ENCODE measurements at regions of chr1 and their contacts with region 1.

Region 1: DNA sequence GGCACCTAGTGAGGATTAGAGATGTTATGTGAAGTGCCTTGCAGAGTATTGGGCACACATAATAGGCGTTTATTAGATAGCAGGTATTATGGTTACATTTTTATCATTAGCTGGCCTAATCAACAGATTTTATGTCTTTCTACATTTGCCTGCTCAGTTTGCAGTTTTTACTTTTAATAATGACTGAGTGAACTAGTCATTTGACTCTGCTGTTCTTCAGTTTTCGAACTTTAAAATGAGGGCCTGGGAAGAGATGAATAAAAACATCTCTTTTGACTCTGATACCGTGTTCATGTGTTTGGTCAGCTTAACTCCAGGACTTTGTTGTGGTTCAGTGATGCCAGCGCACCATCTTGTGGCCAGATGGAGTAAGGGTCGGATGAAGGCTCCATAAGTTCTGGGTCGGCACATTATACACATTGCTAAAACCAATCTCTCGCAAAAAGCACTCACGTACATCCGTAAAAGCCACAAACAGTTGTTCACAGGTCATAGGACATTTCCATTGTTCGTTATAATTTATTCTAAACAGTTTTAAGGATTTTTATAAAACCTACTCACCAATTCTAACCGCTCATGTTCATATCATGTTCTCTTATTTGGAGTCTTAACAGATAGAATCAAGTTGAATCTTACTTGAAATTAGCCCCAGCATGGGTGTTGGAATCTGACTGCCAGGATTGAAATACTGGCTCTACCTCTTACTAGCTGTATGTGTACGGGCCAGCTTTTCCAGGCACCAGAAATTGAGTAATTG is 78.4 kb upstream of the GPR88 start:
- DNase-seq: peak; percentile 60 to 88 (median 74)
- H3K4me3 ChIP-seq: no peak overlapping the region
- H3K27ac ChIP-seq: no peak overlapping the region
- H3K4me1 ChIP-seq: peaks cover 0 to 3% of the 10 kb centered on the region in 2 donors
- H3K27me3 ChIP-seq: no peaks in the 10 kb centered on the region
- CTCF ChIP-seq: peak; percentile 75 to 90 (median 89)
- POLR2A ChIP-seq: no peak

Region 2: DNA sequence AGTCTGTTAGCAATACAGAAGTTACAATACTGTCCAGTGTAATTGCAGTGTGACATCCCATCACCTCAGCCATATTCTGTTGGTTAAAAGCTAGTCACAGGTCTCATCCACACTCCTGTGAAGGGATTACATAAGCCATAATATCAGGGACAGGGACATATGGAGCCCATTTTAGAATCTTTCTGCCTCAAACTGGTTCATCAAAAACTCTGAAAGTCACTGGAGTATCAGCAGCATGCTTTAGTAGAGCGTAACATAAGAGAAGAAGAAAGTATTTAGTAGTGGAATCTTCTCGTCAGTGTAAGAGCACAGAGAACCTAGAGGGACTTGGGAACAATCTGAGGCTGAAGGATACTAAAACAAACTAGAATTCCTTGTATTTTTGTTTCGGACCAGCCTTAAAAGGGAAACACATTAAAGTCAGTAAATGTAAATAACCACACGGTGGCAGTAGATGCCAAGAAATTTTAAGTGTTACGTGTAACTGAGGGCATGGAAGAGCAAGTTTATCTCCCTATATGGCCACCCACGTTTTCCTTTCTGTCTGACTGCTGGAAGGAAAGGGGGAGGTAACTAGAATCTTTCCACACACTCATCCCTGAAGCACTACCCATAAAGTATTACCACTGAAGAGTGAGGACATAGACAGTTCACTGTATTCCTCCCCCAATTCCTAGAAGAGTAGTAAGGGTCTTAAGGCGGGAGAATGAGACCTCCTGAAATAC is 651.0 kb before region 1 on chr1:
- intact Hi-C with region 1: loop called (anchors 5 to 10 kb)
- DNase-seq: peak in 5 of 7 donors; percentile 29 to 60 (median 50)
- H3K4me3 ChIP-seq: no peak overlapping the region
- H3K27ac ChIP-seq: no peak overlapping the region
- H3K4me1 ChIP-seq: no peaks in the 10 kb centered on the region
- H3K27me3 ChIP-seq: no peaks in the 10 kb centered on the region
- CTCF ChIP-seq: peak; percentile 46 to 87 (median 75)
- POLR2A ChIP-seq: no peak

Region 3: DNA sequence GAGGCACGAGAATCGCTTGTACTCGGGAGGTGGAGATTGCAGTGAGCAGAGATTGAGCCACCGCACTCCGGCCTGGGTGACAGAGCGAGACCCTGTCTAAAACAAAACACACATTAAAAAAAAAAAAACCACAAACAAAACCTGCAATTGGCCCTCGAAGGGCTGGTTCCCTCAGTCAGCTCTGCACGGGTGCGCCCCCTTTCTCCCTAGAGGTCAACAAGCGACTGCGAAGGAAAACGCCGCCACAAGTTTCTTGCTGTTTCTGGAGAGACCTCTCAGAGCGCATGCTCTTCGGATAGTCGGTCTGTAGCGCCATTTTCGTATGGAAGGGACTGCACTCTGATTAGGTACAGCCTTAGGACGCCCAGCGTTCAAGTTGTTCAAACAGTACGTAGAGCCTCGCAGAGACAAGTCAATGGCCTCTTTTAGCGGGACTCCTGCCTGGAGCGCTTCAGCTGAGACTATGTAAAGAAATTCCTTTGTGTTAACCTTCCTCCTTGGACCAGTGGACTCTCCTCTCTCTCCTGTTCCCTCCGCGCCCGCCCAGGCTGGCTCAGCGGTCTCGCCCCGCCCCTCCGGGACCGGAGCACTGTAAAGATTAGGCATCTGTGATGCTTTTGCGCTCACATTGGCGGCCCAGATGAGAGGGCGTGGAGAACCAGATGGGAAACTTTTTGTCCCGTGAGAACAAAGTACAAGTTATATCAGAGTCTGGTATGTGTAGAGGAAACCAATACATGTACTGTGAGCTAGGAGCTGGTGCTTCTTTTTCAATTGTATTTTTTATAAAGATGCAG is 108.2 kb before region 1 on chr1:
- intact Hi-C with region 1: loop called in 1 of 2 experiments (anchors 10 kb)
- DNase-seq: peak; percentile 82 to 91 (median 88)
- H3K4me3 ChIP-seq: peak overlapping the region; percentile 33 to 98 (median 61)
- H3K27ac ChIP-seq: peak overlapping the region; percentile 55 to 92 (median 71)
- H3K4me1 ChIP-seq: peaks cover 5 to 18% of the 10 kb centered on the region in 2 donors
- H3K27me3 ChIP-seq: no peaks in the 10 kb centered on the region
- CTCF ChIP-seq: peak in 3 of 6 experiments; percentile 14 to 44 (median 25)
- POLR2A ChIP-seq: peak; percentile 17 to 62

Region 4: DNA sequence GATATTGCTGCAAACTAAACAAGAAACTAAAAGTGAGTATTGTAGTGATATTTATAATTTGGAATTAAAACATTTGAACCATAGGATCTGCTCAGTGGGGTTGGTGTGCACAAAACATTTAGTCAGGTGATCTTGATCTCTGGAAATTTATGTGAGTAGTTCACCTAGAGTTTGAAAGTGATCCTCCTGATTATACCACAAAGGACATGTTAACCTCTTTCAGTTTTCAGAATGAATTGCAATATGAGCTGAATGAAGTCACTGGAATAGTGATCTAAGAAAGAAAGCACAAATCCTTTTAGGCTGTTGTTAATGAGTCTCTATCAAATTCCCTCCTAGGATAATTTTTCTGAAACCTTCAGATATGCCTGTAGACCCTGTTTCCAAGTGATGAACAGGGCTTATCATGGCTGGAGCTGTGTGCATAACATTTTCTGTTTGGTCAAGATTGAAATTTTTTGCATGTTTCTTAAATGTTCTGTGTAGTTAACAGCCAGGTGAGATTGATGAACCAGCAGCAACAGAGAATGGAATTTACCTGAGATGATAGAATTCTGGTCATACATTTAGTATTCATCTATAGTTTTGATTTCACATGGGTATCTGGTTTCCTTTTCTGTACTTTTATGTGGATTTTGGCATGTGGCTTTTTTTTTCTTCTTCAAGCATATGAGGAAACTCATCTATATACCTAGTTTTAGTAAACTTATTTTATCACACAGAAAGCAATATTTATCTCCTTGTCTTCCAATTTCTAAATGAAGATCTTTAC is 81.8 kb before region 1 on chr1:
- intact Hi-C with region 1: no loop called
- DNase-seq: no peak
- H3K4me3 ChIP-seq: no peak overlapping the region
- H3K27ac ChIP-seq: no peak overlapping the region
- H3K4me1 ChIP-seq: no peaks in the 10 kb centered on the region
- H3K27me3 ChIP-seq: no peaks in the 10 kb centered on the region
- CTCF ChIP-seq: no peak
- POLR2A ChIP-seq: no peak

Region 5: GRCh38 chr1:100589667-100590066 is 130.1 kb after region 1 on chr1:
- intact Hi-C with region 1: no loop called
- DNase-seq: no peak
- H3K4me3 ChIP-seq: no peak overlapping the region
- H3K27ac ChIP-seq: no peak overlapping the region
- H3K4me1 ChIP-seq: peaks cover 7 to 11% of the 10 kb centered on the region in 2 donors
- H3K27me3 ChIP-seq: no peaks in the 10 kb centered on the region
- CTCF ChIP-seq: no peak
- POLR2A ChIP-seq: no peak

Region 6: DNA sequence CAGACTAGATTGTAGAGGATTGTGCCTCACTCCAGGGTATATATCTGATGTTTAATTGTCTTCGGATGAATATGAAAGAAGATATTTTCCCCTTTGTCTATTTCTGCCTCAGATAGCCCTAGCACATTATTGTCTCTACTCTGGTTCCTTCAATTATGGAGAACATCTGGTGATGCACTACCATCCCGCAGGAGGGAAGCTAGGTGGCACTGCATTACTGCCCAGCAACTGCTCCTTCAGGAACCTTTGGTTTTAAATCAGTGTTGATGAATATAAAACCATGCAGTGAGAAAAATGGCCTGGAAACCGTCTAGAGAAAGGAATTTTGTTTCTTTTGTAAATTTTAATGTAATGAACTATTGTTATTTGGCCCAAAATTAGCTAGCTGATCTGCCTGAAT is 146.9 kb after region 1 on chr1:
- intact Hi-C with region 1: loop called (anchors 10 kb)
- DNase-seq: peak; percentile 53 to 84 (median 74)
- H3K4me3 ChIP-seq: no peak overlapping the region
- H3K27ac ChIP-seq: no peak overlapping the region
- H3K4me1 ChIP-seq: peaks cover 0 to 8% of the 10 kb centered on the region in 2 donors
- H3K27me3 ChIP-seq: no peaks in the 10 kb centered on the region
- CTCF ChIP-seq: peak; percentile 69 to 90 (median 84)
- POLR2A ChIP-seq: no peak

Region 7: DNA sequence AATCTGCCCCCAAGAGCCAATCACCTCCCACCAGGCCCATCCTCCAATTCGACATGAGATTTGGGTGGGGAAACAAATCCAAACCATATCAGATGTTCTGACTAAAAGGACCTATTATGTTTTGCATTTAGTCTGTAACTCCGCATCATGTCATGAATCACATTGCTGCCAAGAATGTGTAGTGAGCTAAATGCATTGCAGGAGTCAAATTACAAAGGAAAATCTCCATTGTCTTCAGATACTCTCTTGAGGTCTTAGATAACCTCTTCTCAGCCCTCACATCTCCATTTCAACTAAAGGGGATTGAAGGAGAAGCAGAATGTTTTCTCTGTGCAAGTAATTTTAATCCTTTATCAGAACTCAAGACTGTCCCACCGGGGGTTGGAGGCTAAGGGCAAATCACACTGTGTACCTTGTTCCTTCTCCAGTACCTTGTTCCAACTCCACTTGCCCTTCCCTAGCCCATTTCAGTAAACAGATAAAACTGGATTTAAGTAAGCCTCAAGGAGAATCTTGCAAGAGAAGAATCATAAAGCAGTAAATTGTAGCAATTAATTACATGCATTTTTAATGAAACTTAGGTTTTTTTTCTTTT is 401.0 kb after region 1 on chr1:
- intact Hi-C with region 1: loop called (anchors 5 kb)
- DNase-seq: no peak
- H3K4me3 ChIP-seq: no peak overlapping the region
- H3K27ac ChIP-seq: no peak overlapping the region
- H3K4me1 ChIP-seq: no peaks in the 10 kb centered on the region
- H3K27me3 ChIP-seq: no peaks in the 10 kb centered on the region
- CTCF ChIP-seq: no peak
- POLR2A ChIP-seq: no peak

Region 8: DNA sequence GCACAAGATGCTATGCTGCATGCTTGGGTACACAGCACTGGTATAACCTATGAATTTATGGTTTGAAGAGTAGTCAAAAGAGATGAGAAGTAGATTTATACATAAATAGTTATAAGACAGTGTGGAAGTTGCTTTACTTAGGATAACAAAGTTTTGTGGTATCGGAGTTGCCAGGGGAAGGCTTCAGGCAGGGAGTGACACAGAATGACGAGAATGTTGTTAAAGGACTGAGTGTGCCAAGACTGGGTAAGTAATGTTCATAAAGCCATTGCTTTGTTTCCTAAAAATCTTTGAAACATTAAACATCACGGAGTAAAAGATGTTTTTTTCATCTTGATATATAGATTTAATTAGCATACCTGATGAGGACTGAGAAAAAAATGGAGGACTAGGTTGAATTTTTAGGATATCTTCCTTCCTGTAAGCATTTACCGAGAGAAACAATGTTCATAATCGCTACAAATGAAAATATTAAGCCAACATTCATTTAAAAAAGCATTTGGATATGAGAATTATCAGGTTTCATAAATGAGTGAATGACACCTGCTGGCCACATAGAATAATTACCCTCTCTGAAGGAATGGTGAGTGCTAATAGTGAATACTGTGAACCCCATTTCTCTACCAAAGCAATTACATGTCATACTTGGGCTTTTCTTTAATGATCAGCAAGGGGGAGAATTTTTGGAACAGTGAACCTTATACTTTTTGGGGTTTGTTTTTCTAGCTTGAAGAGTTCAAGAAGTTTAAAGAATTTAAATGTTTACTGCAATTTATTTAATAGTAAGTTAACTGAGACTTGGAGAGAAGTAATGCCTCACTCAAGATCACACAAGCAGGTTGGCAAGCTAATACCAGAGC is 406.7 kb after region 1 on chr1:
- intact Hi-C with region 1: loop called (anchors 5 kb)
- DNase-seq: no peak
- H3K4me3 ChIP-seq: peak overlapping the region in 1 of 4 donors; percentile 25
- H3K27ac ChIP-seq: no peak overlapping the region
- H3K4me1 ChIP-seq: peaks cover 0 to 6% of the 10 kb centered on the region in 2 donors
- H3K27me3 ChIP-seq: no peaks in the 10 kb centered on the region
- CTCF ChIP-seq: peak; percentile 42 to 86 (median 73)
- POLR2A ChIP-seq: no peak

Region 9: DNA sequence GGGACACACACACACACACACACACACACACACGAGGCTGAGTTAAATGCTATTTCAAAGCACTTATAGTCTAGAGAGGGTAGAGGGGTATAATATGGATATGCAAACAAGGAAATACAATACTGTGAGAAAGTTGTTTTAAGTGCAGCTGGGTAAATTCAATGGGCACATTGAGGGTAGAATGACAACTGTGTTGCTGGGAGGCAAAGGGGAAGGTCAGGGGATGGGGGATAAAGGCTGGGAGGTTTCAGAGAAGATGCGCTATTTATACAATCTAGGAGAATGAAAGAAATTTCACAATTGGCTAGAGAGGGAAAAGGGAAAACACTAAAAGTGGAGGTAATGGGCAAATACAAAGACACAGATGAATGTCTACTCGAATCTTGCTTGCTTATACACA is 415.7 kb after region 1 on chr1:
- intact Hi-C with region 1: loop called in 1 of 2 experiments (anchors 5 kb)
- DNase-seq: no peak
- H3K4me3 ChIP-seq: no peak overlapping the region
- H3K27ac ChIP-seq: no peak overlapping the region
- H3K4me1 ChIP-seq: peaks cover 0 to 3% of the 10 kb centered on the region in 2 donors
- H3K27me3 ChIP-seq: no peaks in the 10 kb centered on the region
- CTCF ChIP-seq: no peak
- POLR2A ChIP-seq: no peak